B cell (primary cell): ENCODE measurements at regions of chr12 and their contacts with region 1.

Region 1: GRCh38 chr12:104520242-104520900 is 63.6 kb downstream of the CHST11 start:
- DNase-seq: peak; percentile 80
- ATAC-seq: peak; percentile 80
- H3K4me3 ChIP-seq: peak overlapping the region in 3 of 5 experiments; percentile 5 to 40 (median 12)
- H3K4me3 Mint-ChIP-seq: peak overlapping the region; percentile 62
- H3K27ac ChIP-seq: peak overlapping the region; percentile 8 to 64
- H3K27ac Mint-ChIP-seq: peak overlapping the region; percentile 85
- H3K4me1 ChIP-seq: peaks cover 75% of the 10 kb centered on the region in 2 donors
- H3K4me1 Mint-ChIP-seq: peaks cover 92% of the 10 kb centered on the region
- H3K27me3 ChIP-seq: no peaks in the 10 kb centered on the region
- H3K27me3 Mint-ChIP-seq: no peaks in the 10 kb centered on the region
- CTCF ChIP-seq: no peak

Region 2: DNA sequence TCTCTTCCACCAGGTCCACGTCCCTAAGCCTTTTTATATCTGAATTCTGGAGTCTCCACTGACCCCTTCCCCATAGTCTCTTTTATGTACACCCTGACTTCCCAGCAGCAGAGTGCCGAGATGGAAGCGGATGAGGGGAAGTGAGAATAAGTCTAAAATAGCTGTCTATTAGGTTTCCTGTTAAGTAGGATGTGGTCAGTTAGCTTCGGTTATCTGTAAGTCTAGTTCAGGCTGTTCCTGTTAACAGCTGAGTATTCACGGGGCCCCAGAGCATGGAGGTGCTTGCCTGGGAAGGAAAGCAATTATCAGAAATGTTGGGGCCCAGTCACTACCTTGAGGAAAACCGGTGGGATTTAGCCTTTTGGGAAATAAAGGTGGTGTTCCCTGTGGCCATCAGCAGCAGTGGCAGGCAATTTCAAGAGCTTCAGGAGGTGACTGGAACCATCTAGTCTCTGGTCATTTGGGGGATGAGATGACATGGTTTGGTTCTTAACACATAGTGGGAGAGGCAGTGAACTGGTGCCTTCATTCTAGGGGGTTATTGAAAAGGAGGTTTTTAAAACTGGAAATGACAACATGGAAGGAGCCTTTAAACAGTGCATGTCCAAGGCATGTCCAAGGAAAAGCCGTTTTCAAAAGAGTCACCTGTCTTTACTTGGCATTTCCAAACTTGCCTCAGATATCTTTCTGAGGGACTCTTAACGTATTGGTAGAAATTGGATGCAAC is 41.8 kb before region 1 on chr12:
- CTCF ChIA-PET with region 1: interaction called, 3 read pairs
- POLR2A ChIA-PET with region 1: interaction called, 4 read pairs
- intact Hi-C with region 1: loop called (anchors 5 kb)
- DNase-seq: peak; percentile 81
- ATAC-seq: peak; percentile 84
- H3K4me3 ChIP-seq: peak overlapping the region; percentile 23 to 63 (median 45)
- H3K4me3 Mint-ChIP-seq: peak overlapping the region; percentile 95
- H3K27ac ChIP-seq: peak overlapping the region; percentile 62 to 92
- H3K27ac Mint-ChIP-seq: peak overlapping the region; percentile 95
- H3K4me1 ChIP-seq: peaks cover 71 to 83% of the 10 kb centered on the region in 2 donors
- H3K4me1 Mint-ChIP-seq: peaks cover 87% of the 10 kb centered on the region
- H3K27me3 ChIP-seq: no peaks in the 10 kb centered on the region
- H3K27me3 Mint-ChIP-seq: no peaks in the 10 kb centered on the region
- CTCF ChIP-seq: no peak

Region 3: GRCh38 chr12:104505095-104505818 is 15.1 kb before region 1 on chr12:
- CTCF ChIA-PET with region 1: no interaction called
- POLR2A ChIA-PET with region 1: interaction called, 3 read pairs
- intact Hi-C with region 1: loop called (anchors 2 kb)
- DNase-seq: peak; percentile 53
- ATAC-seq: peak; percentile 88
- H3K4me3 ChIP-seq: no peak overlapping the region
- H3K4me3 Mint-ChIP-seq: peak overlapping the region; percentile 70
- H3K27ac ChIP-seq: no peak overlapping the region
- H3K27ac Mint-ChIP-seq: peak overlapping the region; percentile 3
- H3K4me1 ChIP-seq: peaks cover 83 to 85% of the 10 kb centered on the region in 2 donors
- H3K4me1 Mint-ChIP-seq: peaks cover 97% of the 10 kb centered on the region
- H3K27me3 ChIP-seq: no peaks in the 10 kb centered on the region
- H3K27me3 Mint-ChIP-seq: no peaks in the 10 kb centered on the region
- CTCF ChIP-seq: no peak

Region 4: DNA sequence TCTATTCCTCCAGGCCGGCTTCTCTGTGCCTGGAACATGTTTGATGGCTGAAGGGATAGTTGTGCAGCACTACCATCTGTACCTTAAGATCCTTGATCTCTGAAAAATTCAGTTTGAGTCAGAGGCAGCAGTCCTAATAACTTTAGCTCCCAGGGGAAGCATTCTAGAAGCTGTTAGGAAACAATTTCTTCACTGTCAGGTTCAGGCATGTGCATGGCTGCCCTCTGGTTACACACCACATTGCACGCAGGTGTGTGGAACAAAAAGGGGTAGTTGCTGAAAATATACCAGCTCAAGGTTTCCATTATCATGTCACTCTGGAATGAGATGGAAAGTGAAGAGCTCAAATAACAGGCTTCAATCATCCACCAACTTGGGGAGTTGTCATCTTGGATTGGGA is 16.5 kb after region 1 on chr12:
- CTCF ChIA-PET with region 1: no interaction called
- POLR2A ChIA-PET with region 1: no interaction called
- intact Hi-C with region 1: loop called (anchors 2 kb)
- DNase-seq: peak; percentile 55
- ATAC-seq: peak; percentile 75
- H3K4me3 ChIP-seq: no peak overlapping the region
- H3K4me3 Mint-ChIP-seq: peak overlapping the region; percentile 13
- H3K27ac ChIP-seq: no peak overlapping the region
- H3K27ac Mint-ChIP-seq: no peak overlapping the region
- H3K4me1 ChIP-seq: peaks cover 45 to 52% of the 10 kb centered on the region in 2 donors
- H3K4me1 Mint-ChIP-seq: peaks cover 86% of the 10 kb centered on the region
- H3K27me3 ChIP-seq: no peaks in the 10 kb centered on the region
- H3K27me3 Mint-ChIP-seq: no peaks in the 10 kb centered on the region
- CTCF ChIP-seq: no peak

Region 5: GRCh38 chr12:104569346-104570173 is 49.2 kb after region 1 on chr12:
- CTCF ChIA-PET with region 1: interaction called, 3 read pairs
- POLR2A ChIA-PET with region 1: interaction called, 11 read pairs
- intact Hi-C with region 1: loop called (anchors 1 kb)
- DNase-seq: peak; percentile 90
- ATAC-seq: peak; percentile 75
- H3K4me3 ChIP-seq: peak overlapping the region in 3 of 5 experiments; percentile 18 to 50 (median 21)
- H3K4me3 Mint-ChIP-seq: peak overlapping the region; percentile 79
- H3K27ac ChIP-seq: peak overlapping the region; percentile 70 to 87
- H3K27ac Mint-ChIP-seq: peak overlapping the region; percentile 82
- H3K4me1 ChIP-seq: peaks cover 37 to 55% of the 10 kb centered on the region in 2 donors
- H3K4me1 Mint-ChIP-seq: peaks cover 75% of the 10 kb centered on the region
- H3K27me3 ChIP-seq: no peaks in the 10 kb centered on the region
- H3K27me3 Mint-ChIP-seq: no peaks in the 10 kb centered on the region
- CTCF ChIP-seq: no peak

Region 6: DNA sequence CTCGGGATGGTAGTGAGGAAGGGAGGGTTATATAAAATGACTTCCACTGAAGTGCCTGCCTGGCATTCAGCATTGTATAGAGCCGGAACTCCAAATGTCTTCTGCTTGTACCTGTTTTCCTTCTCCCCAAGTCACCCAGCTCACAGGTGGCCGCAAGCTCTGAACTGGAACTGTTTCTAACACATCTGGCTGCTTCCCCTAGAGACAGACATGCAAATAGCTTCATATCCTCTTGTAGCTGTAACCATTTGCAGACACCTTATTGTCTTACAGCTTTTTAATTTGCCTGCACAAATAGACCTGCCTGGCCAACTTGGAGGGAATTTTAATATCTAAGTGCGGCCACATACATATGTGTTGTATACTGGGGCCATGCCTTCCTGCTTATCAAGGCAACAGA is 62.4 kb after region 1 on chr12:
- CTCF ChIA-PET with region 1: interaction called, 3 read pairs
- POLR2A ChIA-PET with region 1: interaction called, 4 read pairs
- intact Hi-C with region 1: loop called (anchors 2 kb)
- DNase-seq: peak; percentile 90
- ATAC-seq: peak; percentile 91
- H3K4me3 ChIP-seq: peak overlapping the region in 3 of 5 experiments; percentile 4 to 30 (median 26)
- H3K4me3 Mint-ChIP-seq: peak overlapping the region; percentile 59
- H3K27ac ChIP-seq: peak overlapping the region; percentile 72 to 93
- H3K27ac Mint-ChIP-seq: peak overlapping the region; percentile 69
- H3K4me1 ChIP-seq: peaks cover 75 to 80% of the 10 kb centered on the region in 2 donors
- H3K4me1 Mint-ChIP-seq: peaks cover 88% of the 10 kb centered on the region
- H3K27me3 ChIP-seq: no peaks in the 10 kb centered on the region
- H3K27me3 Mint-ChIP-seq: no peaks in the 10 kb centered on the region
- CTCF ChIP-seq: no peak